ENCODE measurements at regions of chr3 and their contacts with region 1.

Region 1: DNA sequence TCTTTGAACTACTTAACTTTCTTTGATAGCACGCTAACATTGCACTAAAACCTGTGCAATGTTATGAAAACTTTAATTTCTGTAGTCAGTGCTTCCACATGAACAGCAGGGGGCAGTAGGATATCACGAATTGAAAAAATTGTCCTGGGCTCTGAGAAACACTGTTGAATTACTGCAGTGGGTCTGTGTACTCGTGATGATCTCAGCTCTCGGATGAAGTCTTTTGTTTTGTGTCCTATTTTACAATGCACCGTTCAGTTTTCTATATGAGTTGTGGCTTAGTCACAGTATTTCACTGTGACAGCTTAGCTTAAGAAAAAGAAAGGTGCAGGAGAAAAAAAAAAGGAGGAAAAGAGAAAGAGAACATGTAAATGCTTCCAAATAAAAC is 141.3 kb upstream of the CCDC54 start:
- DNase-seq: peak; percentile 75

Region 2: GRCh38 chr3:107082527-107082926 is 153.4 kb before region 1 on chr3:
- CTCF ChIA-PET with region 1: no interaction called
- POLR2A ChIA-PET with region 1: no interaction called
- DNase-seq: no peak

Region 3: DNA sequence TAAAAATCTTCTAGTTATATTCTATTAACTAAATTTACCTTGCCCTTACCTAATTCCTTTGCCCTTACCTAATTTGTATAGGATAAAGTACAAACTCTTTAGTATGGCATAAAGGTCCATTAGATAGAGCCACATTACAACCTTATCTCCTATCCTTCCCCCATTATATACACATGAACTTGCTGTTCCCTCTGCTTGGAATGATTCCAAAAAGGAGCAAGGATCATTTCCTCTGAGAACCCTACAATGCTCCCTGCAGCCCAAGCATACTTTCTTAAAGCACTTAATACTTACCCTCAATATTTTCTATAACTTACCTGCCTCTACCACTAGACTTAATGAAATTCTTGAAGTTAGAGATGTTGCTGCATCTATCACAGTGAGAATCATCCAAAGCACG is 22.4 kb after region 1 on chr3:
- CTCF ChIA-PET with region 1: no interaction called
- POLR2A ChIA-PET with region 1: no interaction called
- DNase-seq: no peak

Region 4: DNA sequence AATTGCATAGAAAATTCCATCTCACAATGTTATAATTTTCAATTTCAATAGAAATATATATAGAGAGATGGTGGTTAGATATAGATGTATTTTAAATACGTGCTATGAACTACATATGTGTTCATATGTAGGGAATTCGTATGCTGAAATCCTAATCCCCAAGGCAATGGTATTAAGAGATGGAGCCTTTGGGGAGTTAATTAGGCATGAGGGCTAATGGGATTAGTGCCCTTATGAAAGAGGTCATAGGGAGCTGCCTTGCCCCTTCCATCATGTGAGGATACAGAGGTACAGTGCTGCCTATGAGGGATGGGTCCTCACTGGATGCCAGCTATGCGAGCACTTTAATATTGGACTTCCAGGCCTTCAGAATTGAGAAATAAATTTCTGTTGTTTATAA is 61.7 kb after region 1 on chr3:
- CTCF ChIA-PET with region 1: no interaction called
- POLR2A ChIA-PET with region 1: no interaction called
- DNase-seq: no peak

Region 5: DNA sequence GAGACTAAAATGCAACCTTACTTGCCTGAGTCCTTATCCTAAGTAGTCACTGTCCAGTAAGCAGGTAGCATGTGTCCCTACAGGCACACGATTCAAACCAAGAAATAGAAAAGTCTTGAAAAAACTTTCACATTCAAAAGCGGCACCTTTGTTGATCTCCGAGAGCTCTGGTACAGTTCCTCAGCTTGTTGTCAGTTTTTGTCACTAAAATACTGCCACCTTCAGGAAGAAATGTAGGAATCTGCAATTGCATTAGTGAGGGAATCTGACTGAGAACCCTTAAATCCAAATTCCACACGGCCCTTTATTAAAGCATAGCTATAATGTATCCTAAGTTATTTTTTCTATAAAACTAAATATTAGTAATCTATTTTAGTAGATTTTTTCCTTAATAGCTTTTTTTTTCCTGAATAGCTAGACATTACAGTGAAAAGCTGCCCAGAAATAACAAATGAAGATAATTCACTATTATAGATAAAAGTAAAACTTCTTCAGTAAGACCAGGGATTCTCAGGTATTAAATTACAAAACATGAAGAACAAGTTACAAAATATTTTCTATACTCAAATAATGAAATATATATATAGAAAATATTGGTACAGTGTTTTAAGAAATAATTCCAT is 185.4 kb after region 1 on chr3:
- CTCF ChIA-PET with region 1: interaction called, 11 read pairs
- POLR2A ChIA-PET with region 1: no interaction called
- DNase-seq: peak; percentile 58

Region 6: DNA sequence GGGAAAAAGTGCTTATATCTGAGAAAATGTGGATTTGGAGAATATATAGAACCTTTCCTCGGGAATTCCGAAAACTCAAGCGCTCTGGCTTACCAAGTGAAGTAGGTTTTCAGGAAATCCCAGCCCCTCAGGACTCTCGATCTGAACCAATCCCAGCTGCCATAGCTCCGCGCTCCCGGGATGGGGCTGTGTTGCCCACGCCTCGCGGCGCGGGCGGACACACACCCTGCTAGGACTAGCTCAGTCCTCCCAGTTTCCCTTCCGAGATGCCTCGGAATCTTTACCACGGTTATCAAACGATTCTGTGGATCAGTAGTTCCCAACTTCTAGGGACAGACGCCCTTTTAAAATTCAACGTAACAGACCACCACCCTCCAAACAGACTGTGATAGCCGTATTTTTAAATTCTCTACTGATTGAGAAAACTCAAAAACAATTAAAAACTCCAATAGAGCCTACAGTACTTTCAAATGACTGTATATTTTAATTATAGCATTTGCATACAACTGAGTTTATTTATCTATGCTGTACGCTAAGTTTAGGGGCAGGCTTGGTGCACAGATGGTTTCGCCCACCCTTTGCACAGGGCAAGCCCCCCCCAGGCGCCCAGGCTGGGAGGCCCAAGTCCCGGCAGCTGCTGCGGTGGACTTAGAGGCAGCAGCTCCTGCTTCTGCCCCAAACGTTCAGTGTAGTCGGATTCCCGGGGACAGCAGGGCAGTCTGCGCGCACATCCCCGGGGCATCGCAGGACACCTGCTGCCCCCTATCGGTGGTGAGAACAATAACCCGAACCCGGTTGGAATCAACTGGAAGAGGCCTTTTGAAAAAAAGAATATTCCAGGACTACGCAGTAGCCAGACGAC is 193.6 kb after region 1 on chr3:
- CTCF ChIA-PET with region 1: interaction called, 11 read pairs
- POLR2A ChIA-PET with region 1: interaction called, 11 read pairs
- DNase-seq: peak; percentile 90

Region 7: DNA sequence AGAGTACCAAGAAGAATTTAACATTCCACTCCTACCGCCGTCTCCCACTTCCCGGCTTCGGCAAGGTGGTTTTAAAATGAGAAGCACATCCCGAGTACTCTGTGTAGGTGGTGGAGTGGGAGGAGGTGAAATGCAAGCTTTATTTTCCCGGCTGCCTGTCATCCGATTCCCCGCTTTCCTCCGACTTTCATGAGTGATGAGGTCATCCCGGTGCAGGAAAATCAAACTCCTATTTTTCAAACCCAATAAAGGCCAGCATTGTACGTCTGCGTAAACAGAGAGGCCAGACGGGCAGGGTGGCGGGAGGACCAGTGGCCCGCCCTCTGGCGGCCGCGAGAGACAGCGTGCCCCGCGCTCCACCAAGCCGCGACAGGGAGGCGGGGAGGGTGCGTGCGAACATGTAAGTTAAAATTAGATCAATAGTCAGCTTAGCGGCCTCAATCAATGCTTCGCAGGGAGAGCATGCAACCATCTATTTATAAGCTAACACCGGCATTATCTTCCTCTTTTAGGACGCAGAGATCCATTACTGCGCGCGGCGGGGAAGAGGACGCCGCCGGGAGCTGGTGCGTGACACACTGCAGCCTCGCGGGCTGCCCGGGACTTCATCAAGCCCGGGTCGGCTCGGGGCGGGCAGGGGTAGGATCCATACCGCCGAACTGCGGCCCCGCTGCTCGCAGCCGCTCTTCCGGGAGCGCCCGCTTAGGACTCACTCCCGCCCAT is 691.6 kb after region 1 on chr3:
- CTCF ChIA-PET with region 1: interaction called, 12 read pairs
- POLR2A ChIA-PET with region 1: no interaction called
- DNase-seq: peak; percentile 85

Measured in HEK293T (cell line).